Activated CD4-positive, alpha-beta T cell treated with anti-CD3 and anti-CD28 coated beads for 36 hours (primary cell): ENCODE measurements at regions of chr12 and their contacts with region 1.

Region 1: GRCh38 chr12:106247674-106248311 is at the start of gene CKAP4:
- DNase-seq: peak; percentile 72
- ATAC-seq: peak; percentile 49
- H3K4me3 Mint-ChIP-seq: peak within 1 kb of the TSS; percentile 68
- H3K27ac Mint-ChIP-seq: peak within 1 kb of the TSS; percentile 80
- H3K4me1 Mint-ChIP-seq: peaks cover 30% of the 10 kb centered on the region
- H3K27me3 Mint-ChIP-seq: no peaks in the 10 kb centered on the region
- total RNA-seq, gene CKAP4: 13.7 to 15.6 TPM

Region 2: DNA sequence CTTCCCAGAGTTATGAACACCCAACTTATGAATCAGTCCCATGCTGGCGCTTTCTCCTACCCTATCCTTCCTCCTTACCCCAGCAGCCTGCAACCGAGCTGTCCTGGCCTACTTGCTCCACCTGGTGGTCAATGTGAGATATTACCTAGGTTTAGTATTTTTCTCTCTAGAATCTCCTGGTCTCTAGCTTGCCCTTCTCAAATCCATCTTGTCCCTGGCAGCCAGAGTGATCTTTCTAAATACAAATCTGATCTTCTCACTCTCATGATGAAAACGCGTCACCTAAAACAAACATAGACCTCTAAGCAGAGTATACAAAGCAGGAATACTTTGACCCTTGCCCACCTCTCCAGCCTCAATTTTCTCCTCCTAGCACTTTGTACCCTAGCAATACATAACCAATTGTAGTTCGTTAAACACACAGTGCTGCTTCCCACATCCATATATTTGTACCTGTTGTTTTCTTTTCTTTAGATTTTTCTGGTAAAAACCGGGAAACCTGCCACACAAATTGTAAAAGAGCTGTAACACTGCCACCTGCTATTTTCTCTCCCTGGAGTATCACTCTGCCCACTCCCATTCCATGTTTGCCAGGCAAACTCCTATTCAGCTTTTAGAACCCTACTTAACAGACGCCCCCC is 34.8 kb after region 1 on chr12:
- CTCF ChIA-PET with region 1: interaction called, 4 read pairs
- POLR2A ChIA-PET with region 1: no interaction called
- intact Hi-C with region 1: loop called (anchors 2 kb)
- DNase-seq: peak; percentile 72
- ATAC-seq: peak; percentile 83
- H3K4me3 Mint-ChIP-seq: no peak overlapping the region
- H3K27ac Mint-ChIP-seq: no peak overlapping the region
- H3K4me1 Mint-ChIP-seq: peaks cover 11% of the 10 kb centered on the region
- H3K27me3 Mint-ChIP-seq: peaks cover 1% of the 10 kb centered on the region

Region 3: GRCh38 chr12:106302401-106303201 is 54.8 kb after region 1 on chr12 and contains the start of gene TCP11L2:
- CTCF ChIA-PET with region 1: interaction called, 5 read pairs
- POLR2A ChIA-PET with region 1: no interaction called
- intact Hi-C with region 1: loop called (anchors 1 to 2 kb)
- DNase-seq: peak; percentile 94
- ATAC-seq: peak; percentile 67
- H3K4me3 Mint-ChIP-seq: peak within 1 kb of the TSS; percentile 78
- H3K27ac Mint-ChIP-seq: peak within 1 kb of the TSS; percentile 99
- H3K4me1 Mint-ChIP-seq: peaks cover 59% of the 10 kb centered on the region
- H3K27me3 Mint-ChIP-seq: no peaks in the 10 kb centered on the region
- total RNA-seq, gene TCP11L2: 8.6 to 11.8 TPM